ENCODE measurements at regions of chr2 and their contacts with region 1.

Region 1: DNA sequence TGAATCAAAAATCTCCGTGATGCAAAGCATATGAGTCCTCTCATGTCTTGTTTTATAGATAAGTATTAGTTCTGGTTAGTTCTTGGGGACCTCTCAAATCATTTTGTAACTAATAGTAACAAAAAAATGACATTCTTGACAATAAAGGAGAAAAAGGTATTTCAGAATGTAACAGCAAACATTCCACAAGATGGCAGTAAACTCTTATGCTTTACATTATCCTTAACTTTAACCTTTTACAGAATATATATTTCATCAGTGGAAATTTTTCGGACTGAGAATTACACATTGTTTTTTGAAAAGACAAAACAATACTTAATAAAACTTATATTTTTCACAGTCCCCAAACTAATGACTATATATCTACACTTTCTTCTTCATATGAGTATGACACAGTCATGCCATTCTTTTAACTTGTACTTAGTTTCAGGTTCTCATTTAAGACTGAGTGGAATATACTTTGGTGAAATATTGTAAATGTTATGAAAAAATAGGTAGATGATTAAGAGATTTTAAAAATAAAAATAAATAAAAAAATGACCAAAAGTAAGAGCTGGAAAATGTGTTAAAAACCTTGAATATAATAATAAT is 142.9 kb upstream of the NXPH2 start:
- DNase-seq: peak; percentile 22
- ATAC-seq: 0 out of 2 replicates have a peak, but pooled peaks have one; percentile 36
- H3K4me3 ChIP-seq: no peak overlapping the region
- H3K27ac ChIP-seq: no peak overlapping the region
- H3K4me1 ChIP-seq: no peaks in the 10 kb centered on the region
- H3K27me3 ChIP-seq: no peaks in the 10 kb centered on the region
- CTCF ChIP-seq: peak; percentile 34 to 71 (median 70); a peak in 5 of 6 replicates
- POLR2A ChIP-seq: no peak
- RAD21 ChIP-seq: peak; percentile 85

Region 2: DNA sequence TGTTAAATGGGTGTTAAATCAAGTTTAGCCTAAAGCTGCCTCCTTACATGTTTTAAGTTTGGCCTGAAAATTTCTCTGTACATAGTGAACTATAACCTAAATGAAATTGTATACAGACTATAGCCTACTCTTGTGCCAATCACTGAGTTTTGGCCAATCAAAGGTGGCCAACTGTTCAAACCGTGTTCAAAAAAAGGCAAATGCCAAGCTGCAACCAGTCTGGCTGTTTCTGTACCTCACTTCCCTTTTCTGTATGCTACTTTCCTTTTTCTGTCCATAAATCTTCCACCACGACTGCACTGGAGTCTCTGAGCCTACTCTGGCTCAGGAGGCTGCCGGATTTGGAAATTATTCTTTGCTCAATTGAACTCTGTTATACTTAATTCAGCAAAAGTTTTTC is 300.5 kb before region 1 on chr2:
- CTCF ChIA-PET with region 1: no interaction called
- POLR2A ChIA-PET with region 1: no interaction called
- RAD21 ChIA-PET with region 1: no interaction called
- intact Hi-C with region 1: no loop called
- DNase-seq: no peak
- ATAC-seq: no peak
- H3K4me3 ChIP-seq: no peak overlapping the region
- H3K27ac ChIP-seq: no peak overlapping the region
- H3K4me1 ChIP-seq: peaks cover 0 to 6% of the 10 kb centered on the region in 2 experiments; a peak in 1 of 4 replicates
- H3K27me3 ChIP-seq: no peaks in the 10 kb centered on the region
- CTCF ChIP-seq: no peak
- POLR2A ChIP-seq: no peak
- RAD21 ChIP-seq: no peak

Region 3: GRCh38 chr2:139031722-139032121 is 108.7 kb after region 1 on chr2:
- CTCF ChIA-PET with region 1: interaction called, 27 read pairs
- POLR2A ChIA-PET with region 1: no interaction called
- RAD21 ChIA-PET with region 1: interaction called in 1 of 2 experiments, 3 read pairs
- intact Hi-C with region 1: loop called (anchors 1 kb)
- DNase-seq: peak; percentile 48
- ATAC-seq: peak; percentile 94
- H3K4me3 ChIP-seq: no peak overlapping the region
- H3K27ac ChIP-seq: no peak overlapping the region
- H3K4me1 ChIP-seq: peaks cover 0 to 4% of the 10 kb centered on the region in 2 experiments; a peak in 1 of 4 replicates
- H3K27me3 ChIP-seq: no peaks in the 10 kb centered on the region
- CTCF ChIP-seq: peak; percentile 27 to 58 (median 54); a peak in 4 of 6 replicates
- POLR2A ChIP-seq: no peak
- RAD21 ChIP-seq: peak; percentile 84

Region 4: DNA sequence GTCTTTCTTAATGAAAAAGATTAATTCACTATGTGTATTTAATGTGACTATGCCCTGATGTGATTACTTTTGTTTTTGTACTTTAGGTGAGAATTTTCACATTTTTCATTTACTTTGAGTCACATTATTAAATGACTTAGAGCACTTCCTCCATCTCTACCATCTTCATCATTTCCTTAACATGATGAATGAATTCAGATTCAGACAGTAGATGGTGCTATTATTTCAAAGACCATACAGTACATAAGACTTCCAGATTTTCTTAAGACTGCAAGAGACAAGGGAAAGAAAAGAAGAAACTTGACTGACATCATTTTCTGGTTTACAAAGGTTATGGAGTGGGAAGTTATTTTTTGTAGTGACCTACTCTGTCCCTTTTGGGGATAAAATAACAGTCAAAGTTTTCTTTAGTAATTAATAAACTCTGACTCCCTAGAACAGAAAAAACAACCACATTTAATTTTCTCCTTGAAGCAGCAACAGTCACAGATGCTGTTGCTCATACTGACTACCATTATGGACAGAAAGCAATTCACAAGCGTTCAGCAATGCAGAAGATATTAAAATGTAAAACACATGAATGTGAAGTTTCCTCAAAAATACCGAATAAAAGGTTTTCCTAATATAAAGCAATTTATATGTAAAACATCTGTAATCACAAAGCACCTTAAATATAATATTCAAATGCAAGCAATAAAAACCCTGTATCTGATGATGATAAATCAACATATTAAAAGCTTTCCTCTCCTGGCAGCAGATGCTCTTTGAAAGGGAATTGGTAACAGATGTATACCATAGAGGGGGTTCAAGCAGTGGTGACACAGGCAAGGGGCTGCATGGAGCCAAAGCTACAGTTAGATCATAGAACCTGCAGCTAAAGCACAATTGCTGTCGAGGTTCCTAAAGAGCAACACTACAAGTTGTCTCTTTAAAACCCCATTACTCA is 868.0 kb after region 1 on chr2:
- CTCF ChIA-PET with region 1: no interaction called
- POLR2A ChIA-PET with region 1: no interaction called
- RAD21 ChIA-PET with region 1: no interaction called
- intact Hi-C with region 1: loop called (anchors 10 kb)
- DNase-seq: peak; percentile 29
- ATAC-seq: peak; percentile 66
- H3K4me3 ChIP-seq: no peak overlapping the region
- H3K27ac ChIP-seq: no peak overlapping the region
- H3K4me1 ChIP-seq: no peaks in the 10 kb centered on the region
- H3K27me3 ChIP-seq: no peaks in the 10 kb centered on the region
- CTCF ChIP-seq: peak; percentile 25 to 56 (median 44); a peak in 4 of 6 replicates
- POLR2A ChIP-seq: no peak
- RAD21 ChIP-seq: peak; percentile 74

Region 5: DNA sequence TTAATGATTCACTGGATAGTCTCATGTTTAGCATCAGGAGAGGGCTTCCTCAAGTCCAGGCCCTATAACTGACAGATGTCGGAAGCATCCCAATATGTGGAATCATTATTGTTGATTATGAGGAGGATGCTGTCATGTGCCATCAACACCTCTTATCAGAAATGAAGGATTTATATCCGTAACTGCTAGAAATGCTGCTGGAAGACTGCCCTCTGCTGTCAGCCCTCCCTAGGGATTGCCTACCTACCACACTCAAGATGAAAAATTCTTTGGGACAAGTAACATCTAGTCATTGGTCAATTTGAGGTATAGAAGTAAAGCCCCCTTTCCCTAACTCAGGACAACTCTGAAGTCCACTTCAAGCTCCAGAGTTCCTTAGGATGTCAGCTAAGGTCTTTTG is 1023.6 kb after region 1 on chr2:
- CTCF ChIA-PET with region 1: no interaction called
- POLR2A ChIA-PET with region 1: no interaction called
- RAD21 ChIA-PET with region 1: no interaction called
- intact Hi-C with region 1: loop called (anchors 1 kb)
- DNase-seq: peak; percentile 18
- ATAC-seq: peak; percentile 69
- H3K4me3 ChIP-seq: no peak overlapping the region
- H3K27ac ChIP-seq: no peak overlapping the region
- H3K4me1 ChIP-seq: no peaks in the 10 kb centered on the region
- H3K27me3 ChIP-seq: no peaks in the 10 kb centered on the region
- CTCF ChIP-seq: peak; percentile 40 to 61 (median 60); a peak in 5 of 6 replicates
- POLR2A ChIP-seq: no peak
- RAD21 ChIP-seq: peak; percentile 50

Region 6: GRCh38 chr2:140905083-140905781 is 1982.2 kb after region 1 on chr2:
- CTCF ChIA-PET with region 1: no interaction called
- POLR2A ChIA-PET with region 1: no interaction called
- RAD21 ChIA-PET with region 1: no interaction called
- intact Hi-C with region 1: no loop called
- DNase-seq: no peak
- ATAC-seq: no peak
- H3K4me3 ChIP-seq: no peak overlapping the region
- H3K27ac ChIP-seq: no peak overlapping the region
- H3K4me1 ChIP-seq: no peaks in the 10 kb centered on the region
- H3K27me3 ChIP-seq: no peaks in the 10 kb centered on the region
- CTCF ChIP-seq: no peak
- POLR2A ChIP-seq: no peak
- RAD21 ChIP-seq: no peak